Activated B cell treated with CpG ODN at 0.5 μM for 24 hours (primary cell): ENCODE measurements at regions of chr7 and their contacts with region 1.

Region 1: DNA sequence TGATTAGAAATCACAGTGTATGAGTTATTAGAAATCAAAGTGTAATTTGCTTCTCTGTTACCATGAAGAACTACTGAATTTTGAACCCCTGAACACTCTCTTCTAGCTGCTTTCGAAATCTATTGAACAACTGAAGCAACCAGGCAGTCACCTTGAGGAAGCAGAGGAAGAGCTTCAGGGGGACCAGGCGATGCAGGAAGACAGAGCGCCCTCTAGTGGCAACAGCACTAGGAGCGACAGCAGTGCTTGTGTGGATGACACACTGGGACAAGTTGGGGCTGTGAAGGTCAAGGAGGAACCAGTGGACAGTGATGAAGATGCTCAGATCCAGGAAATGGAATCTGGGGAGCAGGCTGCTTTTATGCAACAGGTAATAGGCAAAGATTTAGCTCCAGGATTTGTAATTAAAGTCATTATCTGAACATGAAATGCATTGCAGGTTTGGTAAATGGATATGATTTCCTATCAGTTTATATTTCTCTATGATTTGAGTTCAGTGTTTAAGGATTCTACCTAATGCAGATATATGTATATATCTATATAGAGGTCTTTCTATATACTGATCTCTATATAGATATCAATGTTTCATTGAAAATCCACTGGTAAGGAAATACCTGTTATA is 170.7 kb downstream of the HDAC9 start:
- DNase-seq: peak; percentile 55
- ATAC-seq: peak; percentile 94
- H3K4me3 Mint-ChIP-seq: no peak overlapping the region
- H3K27ac Mint-ChIP-seq: peak overlapping the region; percentile 10
- H3K4me1 Mint-ChIP-seq: peaks cover 9% of the 10 kb centered on the region
- H3K27me3 Mint-ChIP-seq: no peaks in the 10 kb centered on the region
- CTCF ChIP-seq: peak; percentile 99

Region 2: GRCh38 chr7:17680943-17681351 is 985.3 kb before region 1 on chr7:
- CTCF ChIA-PET with region 1: interaction called, 3 read pairs
- POLR2A ChIA-PET with region 1: no interaction called
- intact Hi-C with region 1: loop called (anchors 5 kb)
- DNase-seq: no peak
- ATAC-seq: no peak
- H3K4me3 Mint-ChIP-seq: no peak overlapping the region
- H3K27ac Mint-ChIP-seq: no peak overlapping the region
- H3K4me1 Mint-ChIP-seq: no peaks in the 10 kb centered on the region
- H3K27me3 Mint-ChIP-seq: no peaks in the 10 kb centered on the region
- CTCF ChIP-seq: no peak

Region 3: GRCh38 chr7:18212758-18213157 is 453.5 kb before region 1 on chr7:
- CTCF ChIA-PET with region 1: no interaction called
- POLR2A ChIA-PET with region 1: no interaction called
- intact Hi-C with region 1: loop called (anchors 5 kb)
- DNase-seq: no peak
- ATAC-seq: no peak
- H3K4me3 Mint-ChIP-seq: no peak overlapping the region
- H3K27ac Mint-ChIP-seq: no peak overlapping the region
- H3K4me1 Mint-ChIP-seq: peaks cover 8% of the 10 kb centered on the region
- H3K27me3 Mint-ChIP-seq: no peaks in the 10 kb centered on the region
- CTCF ChIP-seq: no peak

Region 4: GRCh38 chr7:18481776-18482175 is 184.4 kb before region 1 on chr7:
- CTCF ChIA-PET with region 1: no interaction called
- POLR2A ChIA-PET with region 1: no interaction called
- intact Hi-C with region 1: loop called (anchors 5 kb)
- DNase-seq: no peak
- ATAC-seq: no peak
- H3K4me3 Mint-ChIP-seq: no peak overlapping the region
- H3K27ac Mint-ChIP-seq: no peak overlapping the region
- H3K4me1 Mint-ChIP-seq: peaks cover 12% of the 10 kb centered on the region
- H3K27me3 Mint-ChIP-seq: no peaks in the 10 kb centered on the region
- CTCF ChIP-seq: no peak

Region 5: DNA sequence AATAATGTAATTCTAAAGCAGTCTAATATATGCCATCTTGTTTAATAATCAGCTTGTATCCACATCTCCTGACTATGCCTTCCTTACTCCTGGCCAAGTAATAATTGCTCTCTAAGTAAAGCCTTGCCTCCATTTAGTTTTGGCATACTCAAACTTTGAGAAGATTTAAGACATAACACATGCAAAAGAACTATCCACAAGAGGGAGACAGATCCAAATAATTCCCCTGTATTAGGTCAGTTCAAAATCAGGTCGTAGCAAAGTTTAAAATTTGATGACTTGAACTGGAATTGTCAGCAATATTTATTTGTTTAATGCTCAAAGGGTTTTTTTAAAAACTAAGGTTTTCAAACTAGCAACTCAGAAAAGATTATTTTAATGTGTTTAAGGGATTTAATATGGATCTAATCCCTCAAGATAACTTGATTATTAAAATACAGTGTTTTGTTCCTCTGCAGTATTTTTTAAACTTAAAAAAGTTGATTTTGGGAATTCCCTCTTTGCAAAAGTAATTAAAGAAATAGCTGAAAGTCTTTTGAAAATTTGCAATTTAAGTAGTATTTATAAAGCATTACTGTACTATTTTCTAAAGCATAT is 75.4 kb before region 1 on chr7:
- CTCF ChIA-PET with region 1: interaction called, 4 read pairs
- POLR2A ChIA-PET with region 1: no interaction called
- intact Hi-C with region 1: loop called (anchors 5 kb)
- DNase-seq: no peak
- ATAC-seq: peak; percentile 37
- H3K4me3 Mint-ChIP-seq: no peak overlapping the region
- H3K27ac Mint-ChIP-seq: peak overlapping the region; percentile 78
- H3K4me1 Mint-ChIP-seq: peaks cover 30% of the 10 kb centered on the region
- H3K27me3 Mint-ChIP-seq: no peaks in the 10 kb centered on the region
- CTCF ChIP-seq: no peak

Region 6: DNA sequence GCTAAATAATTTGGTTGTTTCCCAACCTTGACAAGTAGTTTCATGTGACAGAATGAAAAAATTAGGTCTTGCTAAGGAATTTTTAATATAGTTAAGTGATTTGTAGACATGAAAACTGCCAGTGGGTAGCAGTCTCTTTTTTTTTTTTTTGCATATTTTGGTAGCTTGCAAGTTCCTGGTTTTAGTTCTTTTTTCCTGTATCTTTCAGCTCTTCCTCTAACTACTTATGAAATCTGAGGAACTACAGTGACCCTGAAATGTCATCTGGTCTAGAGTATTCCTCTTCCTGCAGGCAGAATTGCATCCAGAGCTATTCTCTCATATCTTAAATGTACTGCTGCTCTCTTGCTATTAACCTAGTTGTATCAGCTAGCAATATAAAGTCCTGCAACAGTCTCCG is 10.3 kb before region 1 on chr7:
- CTCF ChIA-PET with region 1: interaction called, 13 read pairs
- POLR2A ChIA-PET with region 1: no interaction called
- intact Hi-C with region 1: no loop called
- DNase-seq: no peak
- ATAC-seq: no peak
- H3K4me3 Mint-ChIP-seq: no peak overlapping the region
- H3K27ac Mint-ChIP-seq: no peak overlapping the region
- H3K4me1 Mint-ChIP-seq: peaks cover 3% of the 10 kb centered on the region
- H3K27me3 Mint-ChIP-seq: no peaks in the 10 kb centered on the region
- CTCF ChIP-seq: no peak

Region 7: GRCh38 chr7:19665399-19666008 is 999.3 kb after region 1 on chr7:
- CTCF ChIA-PET with region 1: no interaction called
- POLR2A ChIA-PET with region 1: no interaction called
- intact Hi-C with region 1: loop called (anchors 1 kb)
- DNase-seq: no peak
- ATAC-seq: peak; percentile 32
- H3K4me3 Mint-ChIP-seq: no peak overlapping the region
- H3K27ac Mint-ChIP-seq: no peak overlapping the region
- H3K4me1 Mint-ChIP-seq: peaks cover 20% of the 10 kb centered on the region
- H3K27me3 Mint-ChIP-seq: no peaks in the 10 kb centered on the region
- CTCF ChIP-seq: no peak